ENCODE measurements at regions of chr13 and their contacts with region 1.

Region 1: GRCh38 chr13:40974460-40975407 is 44.4 kb downstream of the ELF1 start:
- DNase-seq: peak; percentile 51
- ATAC-seq: peak; percentile 83
- H3K4me3 Mint-ChIP-seq: peak overlapping the region; percentile 45
- H3K27ac Mint-ChIP-seq: peak overlapping the region; percentile 82
- H3K4me1 Mint-ChIP-seq: peaks cover 94% of the 10 kb centered on the region
- H3K27me3 Mint-ChIP-seq: no peaks in the 10 kb centered on the region

Region 2: DNA sequence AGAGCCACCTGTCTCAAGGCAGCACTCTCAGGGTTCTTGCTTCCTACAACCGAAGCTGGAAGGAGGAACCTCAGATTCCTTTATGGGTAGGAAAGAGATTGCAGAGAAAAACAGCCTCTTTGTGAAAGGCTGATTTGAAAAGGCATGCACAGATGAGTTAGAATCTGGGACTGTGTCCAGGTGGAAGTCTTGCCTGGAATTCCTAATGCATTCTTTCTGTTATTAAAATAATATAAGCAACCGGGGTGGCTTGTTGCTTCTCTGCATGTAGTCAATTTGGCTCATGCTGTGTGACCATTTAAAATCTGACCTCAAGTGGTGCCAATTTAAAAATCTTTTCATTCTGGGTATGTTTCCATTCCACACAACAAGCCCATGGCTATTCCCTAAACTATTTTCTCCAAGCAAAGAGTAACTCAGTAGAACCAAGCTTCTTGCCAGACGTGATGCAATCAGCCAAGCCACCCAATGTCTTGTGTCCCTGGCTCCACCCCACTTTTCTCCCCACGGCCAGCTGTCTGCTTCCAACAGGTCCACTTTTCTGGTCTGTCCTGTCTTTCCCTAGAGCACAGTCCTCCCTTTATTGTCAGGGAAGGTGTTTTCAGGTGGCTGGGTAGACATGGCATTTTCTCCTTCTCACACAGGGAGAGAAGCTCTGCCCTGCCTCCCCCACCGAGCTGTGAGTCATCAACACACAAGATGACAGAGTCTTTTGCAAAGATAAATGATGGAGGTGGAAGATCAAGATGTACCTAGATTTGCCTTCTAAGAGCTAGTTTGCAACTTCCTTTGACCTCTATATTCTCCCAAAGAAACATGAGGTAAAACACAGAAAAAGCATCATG is 702.6 kb before region 1 on chr13:
- CTCF ChIA-PET with region 1: no interaction called
- POLR2A ChIA-PET with region 1: no interaction called
- intact Hi-C with region 1: no loop called
- DNase-seq: peak; percentile 77
- ATAC-seq: peak; percentile 92
- H3K4me3 Mint-ChIP-seq: no peak overlapping the region
- H3K27ac Mint-ChIP-seq: peak overlapping the region; percentile 70
- H3K4me1 Mint-ChIP-seq: peaks cover 30% of the 10 kb centered on the region
- H3K27me3 Mint-ChIP-seq: no peaks in the 10 kb centered on the region

Region 3: GRCh38 chr13:40613192-40613818 is 361.4 kb before region 1 on chr13:
- CTCF ChIA-PET with region 1: no interaction called
- POLR2A ChIA-PET with region 1: no interaction called
- intact Hi-C with region 1: loop called in 1 of 2 experiments (anchors 10 kb)
- DNase-seq: peak; percentile 71
- ATAC-seq: peak; percentile 86
- H3K4me3 Mint-ChIP-seq: peak overlapping the region; percentile 75
- H3K27ac Mint-ChIP-seq: peak overlapping the region; percentile 99
- H3K4me1 Mint-ChIP-seq: peaks cover 95% of the 10 kb centered on the region
- H3K27me3 Mint-ChIP-seq: no peaks in the 10 kb centered on the region

Region 4: DNA sequence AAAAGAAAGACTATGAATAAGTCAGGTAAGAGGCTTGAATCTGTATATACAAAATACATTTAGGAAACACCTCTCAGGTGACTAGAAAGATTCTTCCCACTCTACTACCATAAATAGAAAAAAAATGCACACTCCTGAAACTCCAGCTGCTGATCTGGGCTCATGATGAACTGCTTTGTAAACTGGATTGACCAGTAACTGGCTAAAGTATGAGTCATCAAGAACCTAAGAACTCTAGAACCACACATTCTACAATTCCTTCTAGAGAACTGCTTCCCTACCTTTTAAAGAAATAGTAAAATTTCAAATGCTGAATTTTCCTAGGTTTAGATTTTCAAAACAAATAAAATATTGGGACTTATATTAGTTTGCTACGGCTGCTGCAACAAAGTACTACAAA is 10.8 kb before region 1 on chr13:
- CTCF ChIA-PET with region 1: interaction called, 21 read pairs
- POLR2A ChIA-PET with region 1: no interaction called
- intact Hi-C with region 1: no loop called
- DNase-seq: no peak
- ATAC-seq: peak; percentile 71
- H3K4me3 Mint-ChIP-seq: no peak overlapping the region
- H3K27ac Mint-ChIP-seq: no peak overlapping the region
- H3K4me1 Mint-ChIP-seq: peaks cover 79% of the 10 kb centered on the region
- H3K27me3 Mint-ChIP-seq: no peaks in the 10 kb centered on the region

Region 5: GRCh38 chr13:40992678-40993518 is 18.2 kb after region 1 on chr13:
- CTCF ChIA-PET with region 1: interaction called, 15 read pairs
- POLR2A ChIA-PET with region 1: interaction called, 3 read pairs
- intact Hi-C with region 1: no loop called
- DNase-seq: no peak
- ATAC-seq: no peak
- H3K4me3 Mint-ChIP-seq: no peak overlapping the region
- H3K27ac Mint-ChIP-seq: peak overlapping the region; percentile 84
- H3K4me1 Mint-ChIP-seq: peaks cover 86% of the 10 kb centered on the region
- H3K27me3 Mint-ChIP-seq: no peaks in the 10 kb centered on the region

Region 6: DNA sequence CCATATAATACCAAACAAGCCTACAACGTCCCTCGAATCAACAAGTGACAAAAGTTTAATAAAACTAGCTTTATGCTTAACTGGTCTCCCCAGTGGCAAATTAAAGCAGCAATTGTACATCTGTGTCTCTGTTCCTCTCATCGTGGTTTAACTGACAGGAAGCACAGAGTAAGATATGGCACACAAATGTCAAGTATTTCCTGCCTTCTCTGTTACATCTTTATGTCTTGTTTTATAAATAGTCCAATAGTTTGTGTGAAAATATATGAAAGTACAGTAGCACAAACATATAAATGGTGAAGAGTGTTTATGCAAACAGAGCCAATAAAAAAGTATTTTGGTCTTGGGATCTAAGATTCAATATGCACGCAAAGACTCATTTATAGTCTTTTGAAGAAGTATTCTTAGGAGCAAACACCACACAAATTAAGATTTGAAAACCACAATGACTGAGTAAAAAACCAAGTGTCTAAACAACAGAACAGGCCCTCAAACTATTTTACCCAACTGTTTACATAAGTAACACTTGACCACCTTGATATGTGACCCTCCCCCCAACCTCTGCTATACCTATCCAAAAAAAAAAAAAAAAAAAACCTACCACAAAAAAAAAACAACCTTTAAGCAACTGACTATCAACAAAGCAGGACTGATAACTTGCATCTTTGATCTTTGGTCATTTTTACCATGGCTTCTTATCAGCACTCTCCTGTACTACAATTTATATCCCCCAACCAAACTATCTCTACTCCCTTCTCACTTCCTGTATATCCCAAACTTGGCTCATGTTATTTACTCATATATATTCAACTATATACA is 30.4 kb after region 1 on chr13:
- CTCF ChIA-PET with region 1: interaction called, 10 read pairs
- POLR2A ChIA-PET with region 1: no interaction called
- intact Hi-C with region 1: no loop called
- DNase-seq: no peak
- ATAC-seq: peak; percentile 76
- H3K4me3 Mint-ChIP-seq: peak overlapping the region; percentile 29
- H3K27ac Mint-ChIP-seq: peak overlapping the region; percentile 93
- H3K4me1 Mint-ChIP-seq: peaks cover 63% of the 10 kb centered on the region
- H3K27me3 Mint-ChIP-seq: no peaks in the 10 kb centered on the region

Region 7: DNA sequence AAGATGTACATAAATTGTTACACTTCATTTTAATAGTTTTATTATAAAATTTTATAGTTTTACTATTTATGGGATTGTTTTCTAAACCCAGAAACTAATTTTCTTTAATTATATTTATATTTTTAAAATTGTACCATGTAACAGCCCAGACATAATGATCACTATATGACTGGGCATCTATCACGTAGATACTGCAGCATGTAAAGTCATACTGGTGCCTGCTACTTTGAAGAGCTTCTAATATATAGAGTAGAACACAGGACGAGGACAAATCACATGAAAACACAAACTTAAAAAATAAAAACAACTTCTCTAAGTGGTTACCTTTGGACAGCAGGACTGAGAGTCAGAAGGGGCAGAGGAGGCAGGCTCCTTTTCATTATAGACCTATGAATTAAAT is 39.1 kb after region 1 on chr13:
- CTCF ChIA-PET with region 1: interaction called, 29 read pairs
- POLR2A ChIA-PET with region 1: interaction called, 5 read pairs
- intact Hi-C with region 1: loop called in 1 of 2 experiments (anchors 2 kb)
- DNase-seq: no peak
- ATAC-seq: peak; percentile 85
- H3K4me3 Mint-ChIP-seq: peak overlapping the region; percentile 47
- H3K27ac Mint-ChIP-seq: peak overlapping the region; percentile 95
- H3K4me1 Mint-ChIP-seq: peaks cover 47% of the 10 kb centered on the region
- H3K27me3 Mint-ChIP-seq: no peaks in the 10 kb centered on the region

Region 8: GRCh38 chr13:41019011-41019487 is 44.3 kb after region 1 on chr13 and contains the start of gene ELF1:
- CTCF ChIA-PET with region 1: interaction called, 29 read pairs
- POLR2A ChIA-PET with region 1: interaction called, 5 read pairs
- intact Hi-C with region 1: loop called in 1 of 2 experiments (anchors 2 kb)
- DNase-seq: peak; percentile 67
- ATAC-seq: peak; percentile 87
- H3K4me3 Mint-ChIP-seq: peak within 1 kb of the TSS; percentile 88
- H3K27ac Mint-ChIP-seq: peak within 1 kb of the TSS; percentile 96
- H3K4me1 Mint-ChIP-seq: peaks cover 31% of the 10 kb centered on the region
- H3K27me3 Mint-ChIP-seq: no peaks in the 10 kb centered on the region
- total RNA-seq, gene ELF1: 75.2 to 87.0 TPM

Region 9: GRCh38 chr13:41098761-41099160 is 124.0 kb after region 1 on chr13:
- CTCF ChIA-PET with region 1: no interaction called
- POLR2A ChIA-PET with region 1: no interaction called
- intact Hi-C with region 1: no loop called
- DNase-seq: no peak
- ATAC-seq: no peak
- H3K4me3 Mint-ChIP-seq: no peak overlapping the region
- H3K27ac Mint-ChIP-seq: no peak overlapping the region
- H3K4me1 Mint-ChIP-seq: no peaks in the 10 kb centered on the region
- H3K27me3 Mint-ChIP-seq: no peaks in the 10 kb centered on the region